SK-N-SH (cell line): ENCODE measurements at regions of chr6 and their contacts with region 1.

Region 1: GRCh38 chr6:30821862-30822782 is 62.2 kb upstream of the DDR1 start:
- DNase-seq: peak; percentile 45
- H3K4me3 ChIP-seq: no peak overlapping the region
- H3K27ac ChIP-seq: no peak overlapping the region; a peak in 1 of 4 replicates
- H3K4me1 ChIP-seq: peaks cover 0 to 28% of the 10 kb centered on the region in 2 experiments; a peak in 2 of 4 replicates
- H3K27me3 ChIP-seq: no peaks in the 10 kb centered on the region
- CTCF ChIP-seq: peak; percentile 68
- EP300 ChIP-seq: no peak
- RAD21 ChIP-seq: peak; percentile 47

Region 2: DNA sequence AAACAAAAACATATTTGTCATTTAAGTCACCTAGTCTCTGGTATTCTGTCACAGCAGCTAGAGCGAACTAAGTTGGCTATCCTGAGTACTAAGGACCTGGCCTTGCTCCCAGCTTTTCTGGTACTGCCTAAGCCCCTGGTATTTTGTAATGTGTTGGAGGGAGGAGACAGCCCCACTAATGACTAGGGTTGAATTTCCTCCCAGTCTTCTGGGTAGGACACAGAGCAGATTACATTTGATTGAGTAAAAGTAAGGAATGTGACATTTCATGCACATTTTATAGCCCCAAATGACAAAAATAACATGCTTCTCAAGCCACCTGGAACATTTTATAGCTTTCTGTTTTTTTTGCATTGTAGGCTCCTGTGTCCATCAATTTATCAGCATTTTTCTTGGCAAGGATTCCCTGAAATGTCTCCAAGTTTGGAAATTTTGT is 14.3 kb after region 1 on chr6:
- CTCF ChIA-PET with region 1: interaction called, 26 read pairs
- POLR2A ChIA-PET with region 1: interaction called, 3 read pairs
- DNase-seq: no peak
- H3K4me3 ChIP-seq: no peak overlapping the region
- H3K27ac ChIP-seq: no peak overlapping the region
- H3K4me1 ChIP-seq: no peaks in the 10 kb centered on the region; a peak in 1 of 4 replicates
- H3K27me3 ChIP-seq: no peaks in the 10 kb centered on the region
- CTCF ChIP-seq: no peak
- EP300 ChIP-seq: no peak
- RAD21 ChIP-seq: no peak

Region 3: GRCh38 chr6:30857549-30857948 is 35.4 kb after region 1 on chr6:
- CTCF ChIA-PET with region 1: no interaction called
- POLR2A ChIA-PET with region 1: no interaction called
- DNase-seq: no peak
- H3K4me3 ChIP-seq: no peak overlapping the region
- H3K27ac ChIP-seq: no peak overlapping the region
- H3K4me1 ChIP-seq: no peaks in the 10 kb centered on the region
- H3K27me3 ChIP-seq: no peaks in the 10 kb centered on the region
- CTCF ChIP-seq: no peak
- EP300 ChIP-seq: no peak
- RAD21 ChIP-seq: no peak

Region 4: GRCh38 chr6:30883685-30884520 is 61.8 kb after region 1 on chr6 and contains the start of gene DDR1:
- CTCF ChIA-PET with region 1: interaction called, 103 read pairs
- POLR2A ChIA-PET with region 1: no interaction called
- DNase-seq: peak; percentile 91
- H3K4me3 ChIP-seq: peak within 1 kb of the TSS; percentile 62 to 69
- H3K27ac ChIP-seq: peak within 1 kb of the TSS; percentile 51 to 83; a peak in 3 of 4 replicates
- H3K4me1 ChIP-seq: peaks cover 20 to 31% of the 10 kb centered on the region in 2 experiments; a peak in 3 of 4 replicates
- H3K27me3 ChIP-seq: no peaks in the 10 kb centered on the region
- CTCF ChIP-seq: no peak
- EP300 ChIP-seq: no peak
- RAD21 ChIP-seq: no peak
- polyA plus RNA-seq, gene DDR1: 40.2 and 52.8 TPM in 2 replicates